HEK293T (cell line): ENCODE measurements at regions of chr4 and their contacts with region 1.

Region 1: DNA sequence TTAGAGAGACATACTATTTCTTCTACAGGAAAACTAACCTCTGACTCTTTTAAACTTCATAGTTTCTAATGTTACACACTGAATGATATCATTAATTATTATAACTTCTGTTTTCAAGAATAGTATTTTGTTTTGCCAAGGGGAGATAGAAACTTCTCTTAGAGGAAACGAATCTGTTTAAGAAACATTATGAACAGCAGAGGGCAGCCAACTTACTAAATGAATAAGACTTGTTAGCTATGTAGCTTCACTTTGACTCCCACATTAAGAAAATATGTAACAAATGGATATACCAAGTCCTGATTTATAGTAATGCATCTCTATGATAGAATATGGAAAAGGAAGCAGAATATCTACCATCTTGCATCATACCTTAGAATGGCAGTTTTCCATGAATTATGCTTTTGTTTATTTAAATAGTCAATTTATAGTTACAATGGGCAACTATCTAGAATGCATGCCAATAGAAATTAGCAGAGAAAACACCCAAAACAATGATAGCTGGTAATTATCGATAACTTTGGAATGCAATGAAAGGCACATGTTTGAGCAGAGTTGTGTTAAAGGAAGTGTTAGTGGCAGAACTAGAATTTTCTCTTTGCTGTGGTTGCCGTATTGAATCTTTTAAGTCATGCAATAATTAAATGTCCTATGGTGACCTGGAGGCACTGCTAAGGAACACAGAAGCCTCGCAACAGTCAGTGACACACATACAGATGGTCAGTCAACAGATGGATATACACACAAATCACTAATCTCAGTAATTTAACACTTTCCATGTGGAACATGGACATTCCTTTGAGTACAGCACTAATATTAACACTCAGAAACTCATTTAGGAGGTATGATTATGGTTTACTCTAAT is 105.7 kb upstream of the PDLIM3 start:
- DNase-seq: no peak

Region 2: GRCh38 chr4:185625503-185625902 is 15.5 kb before region 1 on chr4:
- CTCF ChIA-PET with region 1: no interaction called
- POLR2A ChIA-PET with region 1: no interaction called
- DNase-seq: no peak

Region 3: DNA sequence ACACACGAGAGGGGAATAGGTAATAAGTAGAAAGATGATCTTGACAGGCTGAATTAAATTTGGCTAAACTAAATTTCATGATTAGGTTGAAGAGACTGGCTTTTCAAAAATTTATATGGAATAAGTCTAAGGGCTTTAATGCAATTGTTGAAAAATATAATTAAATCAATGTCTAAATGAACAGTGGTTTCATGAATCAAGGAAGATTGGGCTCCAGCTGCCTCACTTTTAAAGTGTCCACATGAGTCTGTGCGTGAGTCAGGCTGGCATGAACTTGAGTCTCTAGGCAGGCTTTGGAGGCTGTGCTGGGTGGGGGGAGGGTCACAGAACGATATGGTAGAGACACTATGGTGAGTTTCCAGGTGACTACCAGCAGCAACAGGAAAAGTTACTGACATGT is 59.0 kb after region 1 on chr4:
- CTCF ChIA-PET with region 1: no interaction called
- POLR2A ChIA-PET with region 1: no interaction called
- DNase-seq: no peak

Region 4: GRCh38 chr4:186021461-186022167 is 380.6 kb after region 1 on chr4:
- CTCF ChIA-PET with region 1: interaction called, 23 read pairs
- POLR2A ChIA-PET with region 1: interaction called, 3 read pairs
- DNase-seq: peak; percentile 55